H1 (cell line): ENCODE measurements at regions of chr7 and their contacts with region 1.

Region 1: DNA sequence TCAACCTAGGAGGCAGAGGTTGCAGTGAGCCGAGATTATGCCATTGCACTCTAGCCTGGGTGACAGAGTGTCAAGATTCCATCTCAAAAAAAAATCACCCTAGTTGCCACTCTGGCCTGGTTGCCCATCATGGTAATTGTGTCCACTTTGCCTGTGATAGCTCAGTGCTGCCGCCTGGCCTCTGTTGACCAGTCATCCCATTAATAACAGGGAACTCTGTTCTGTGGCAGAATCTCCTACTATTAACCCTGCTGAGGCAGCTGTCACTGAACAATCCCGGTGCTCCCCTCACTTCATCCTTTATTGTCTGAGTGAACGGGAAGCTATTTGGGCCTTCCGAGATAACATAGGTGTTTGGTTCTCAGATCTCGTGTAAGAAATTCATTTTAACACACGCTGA is 14.6 kb downstream of the ZNF3 start:
- DNase-seq: no peak
- H3K4me3 ChIP-seq: no peak overlapping the region
- H3K27ac ChIP-seq: no peak overlapping the region
- H3K4me1 ChIP-seq: no peaks in the 10 kb centered on the region
- H3K27me3 ChIP-seq: no peaks in the 10 kb centered on the region
- CTCF ChIP-seq: peak; percentile 0 to 23 (median 4); a peak in 3 of 4 replicates
- EP300 ChIP-seq: no peak
- POLR2A ChIP-seq: no peak
- RAD21 ChIP-seq: peak in 1 of 2 experiments; percentile 22; a peak in 1 of 4 replicates

Region 2: GRCh38 chr7:100081535-100082102 is 14.7 kb after region 1 on chr7 and contains the start of gene ZNF3:
- CTCF ChIA-PET with region 1: interaction called, 5 read pairs
- POLR2A ChIA-PET with region 1: interaction called, 294 read pairs
- DNase-seq: peak; percentile 97
- H3K4me3 ChIP-seq: peak within 1 kb of the TSS; percentile 76 to 100 (median 96)
- H3K27ac ChIP-seq: peak within 1 kb of the TSS; percentile 91
- H3K4me1 ChIP-seq: peaks cover 0 to 9% (median 4%) of the 10 kb centered on the region in 4 experiments; a peak in 3 of 7 replicates
- H3K27me3 ChIP-seq: no peaks in the 10 kb centered on the region
- CTCF ChIP-seq: peak; percentile 84 to 94 (median 85)
- EP300 ChIP-seq: peak in 1 of 2 experiments; percentile 81; a peak in 1 of 3 replicates
- POLR2A ChIP-seq: peak; percentile 77 to 95
- RAD21 ChIP-seq: peak; percentile 67 to 71
- total RNA-seq, gene ZNF3: 49.1 and 50.7 TPM in 2 replicates

Region 3: DNA sequence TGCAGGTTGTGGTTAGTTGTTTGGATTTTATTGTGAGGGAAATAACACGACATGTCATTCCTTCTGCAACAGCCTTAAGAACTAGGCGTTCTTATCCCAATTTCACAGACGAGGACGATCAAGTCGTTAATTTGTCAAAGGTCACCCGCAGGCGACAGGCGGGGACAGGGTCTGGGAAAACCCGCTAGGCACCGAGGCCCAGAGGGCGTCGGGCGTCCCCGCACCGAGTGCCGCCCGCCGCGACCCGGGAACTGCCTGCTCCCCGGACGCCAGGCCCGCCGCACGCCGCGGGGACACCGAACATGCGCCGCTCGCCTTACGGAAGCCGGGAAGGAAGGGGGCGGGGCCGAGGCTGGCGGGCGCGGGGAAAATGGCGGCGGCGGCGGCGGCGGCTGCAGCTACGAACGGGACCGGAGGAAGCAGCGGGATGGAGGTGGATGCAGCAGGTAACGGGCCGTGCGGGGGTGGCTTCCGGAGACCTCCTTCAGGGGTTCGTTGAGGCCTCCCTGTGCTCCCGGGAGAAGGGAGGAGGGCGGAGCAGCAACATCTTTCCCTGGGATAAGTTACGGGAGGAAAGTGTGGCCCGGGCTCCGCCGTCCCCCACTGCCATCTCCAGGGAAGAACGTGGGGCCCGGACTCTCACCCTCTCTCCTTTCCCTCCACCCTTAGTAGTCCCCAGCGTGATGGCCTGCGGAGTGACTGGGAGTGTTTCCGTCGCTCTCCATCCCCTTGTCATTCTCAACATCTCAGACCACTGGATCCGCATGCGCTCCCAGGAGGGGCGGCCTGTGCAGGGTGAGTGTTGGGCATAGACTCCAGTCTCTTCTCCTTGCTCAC is 21.9 kb after region 1 on chr7 and contains the start of gene COPS6:
- CTCF ChIA-PET with region 1: no interaction called
- POLR2A ChIA-PET with region 1: interaction called, 70 read pairs
- DNase-seq: peak in 1 of 2 experiments; percentile 93
- H3K4me3 ChIP-seq: peak within 1 kb of the TSS; percentile 78 to 98 (median 96)
- H3K27ac ChIP-seq: peak within 1 kb of the TSS; percentile 77
- H3K4me1 ChIP-seq: no peaks in the 10 kb centered on the region; a peak in 1 of 7 replicates
- H3K27me3 ChIP-seq: no peaks in the 10 kb centered on the region
- CTCF ChIP-seq: no peak
- EP300 ChIP-seq: peak in 1 of 2 experiments; percentile 13; a peak in 1 of 3 replicates
- POLR2A ChIP-seq: peak; percentile 54 to 83
- RAD21 ChIP-seq: no peak
- total RNA-seq, gene COPS6: 127 and 128 TPM in 2 replicates